ENCODE measurements at regions of chr10 and their contacts with region 1.

Region 1: DNA sequence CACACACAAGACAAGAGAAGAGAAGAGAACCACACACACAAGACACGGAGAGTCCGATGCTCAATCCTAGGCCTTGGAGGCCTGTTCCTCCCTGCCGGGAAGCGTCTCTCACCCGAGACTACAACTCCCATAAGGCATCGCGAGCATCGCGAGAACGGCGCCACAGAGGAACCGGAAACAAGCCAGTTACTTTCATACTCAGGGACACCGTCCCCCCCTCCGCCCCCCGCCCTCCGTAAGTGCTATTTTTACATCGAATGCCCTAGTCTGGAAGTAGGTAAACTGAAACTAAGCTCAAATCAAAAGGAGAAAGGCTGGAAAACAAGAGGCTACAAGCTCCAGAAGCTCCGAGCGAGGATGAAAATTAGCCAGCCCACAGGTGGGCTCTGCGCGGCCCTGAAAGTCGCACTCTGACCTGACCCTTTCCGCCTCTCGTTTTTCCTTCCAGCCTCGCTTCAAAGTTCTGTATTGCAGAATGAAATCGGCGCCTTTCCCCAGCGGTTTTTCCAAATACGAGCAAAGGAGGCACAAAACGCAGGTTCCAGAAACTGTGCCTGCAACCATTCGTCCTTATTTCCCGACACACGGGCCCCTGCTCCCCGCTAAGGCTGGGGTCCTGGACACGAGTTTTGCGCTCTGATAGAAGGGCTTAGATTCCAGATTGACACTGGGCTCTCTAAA is 11.5 kb upstream of the DNAJC12 start:
- DNase-seq: peak; percentile 81 to 91 (median 89)
- ATAC-seq: peak; percentile 100
- H3K4me3 ChIP-seq: peak overlapping the region; percentile 79
- H3K4me3 Mint-ChIP-seq: peak overlapping the region; percentile 84 to 99 (median 96)
- H3K27ac ChIP-seq: peak overlapping the region; percentile 82
- H3K27ac Mint-ChIP-seq: peak overlapping the region; percentile 81 to 100 (median 97)
- H3K4me1 ChIP-seq: peaks cover 5 to 6% of the 10 kb centered on the region in 2 donors
- H3K4me1 Mint-ChIP-seq: peaks cover 5 to 12% (median 8%) of the 10 kb centered on the region in 7 donors
- H3K27me3 ChIP-seq: no peaks in the 10 kb centered on the region
- H3K27me3 Mint-ChIP-seq: no peaks in the 10 kb centered on the region

Region 2: DNA sequence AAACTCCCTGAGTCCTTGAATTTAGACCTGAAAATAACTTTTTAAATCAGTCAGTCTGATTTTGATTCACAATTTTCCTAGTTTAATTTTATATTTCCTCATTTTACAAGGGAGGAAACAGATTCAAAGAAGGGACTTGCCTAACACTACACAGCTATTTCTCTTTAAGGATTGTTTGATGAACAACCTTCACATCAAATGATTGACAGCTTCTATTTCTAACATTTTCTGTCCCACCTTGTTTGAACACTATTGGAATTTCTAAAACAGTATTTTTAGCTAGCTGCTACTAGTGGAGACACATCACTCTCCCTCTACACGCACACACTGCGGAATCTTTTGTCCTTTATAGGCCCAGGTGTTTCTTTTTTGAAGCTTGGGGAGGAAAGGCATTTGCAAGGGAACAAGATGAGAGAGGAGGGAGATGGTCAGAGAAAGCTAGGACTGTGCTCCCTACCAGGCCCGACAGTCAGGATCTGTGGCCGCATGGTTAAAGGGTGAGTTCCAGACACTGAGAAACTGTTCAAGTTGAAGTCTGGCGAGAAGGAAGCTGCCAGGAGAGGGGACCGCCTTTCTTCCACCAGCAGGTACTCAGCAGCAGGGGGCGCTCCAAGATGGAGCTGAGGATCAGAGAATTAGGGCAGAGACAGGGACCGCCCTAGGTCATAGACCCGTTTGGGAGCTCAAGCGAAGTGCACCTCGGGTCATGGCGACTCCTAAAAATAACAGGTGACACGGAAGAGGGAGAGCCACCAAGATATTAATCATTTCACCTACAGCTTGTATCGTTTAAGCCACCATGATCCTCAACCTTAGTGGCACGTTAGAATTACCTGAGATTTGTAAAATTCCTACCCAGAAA is 61.2 kb before region 1 on chr10:
- CTCF ChIA-PET with region 1: interaction called, 5 read pairs
- POLR2A ChIA-PET with region 1: no interaction called
- intact Hi-C with region 1: loop called in 1 of 2 experiments (anchors 1 kb)
- DNase-seq: peak; percentile 23 to 74 (median 52)
- ATAC-seq: peak; percentile 84
- H3K4me3 ChIP-seq: no peak overlapping the region
- H3K4me3 Mint-ChIP-seq: peak overlapping the region in 5 of 10 donors; percentile 2 to 71 (median 59)
- H3K27ac ChIP-seq: no peak overlapping the region
- H3K27ac Mint-ChIP-seq: peak overlapping the region in 3 of 9 donors; percentile 15 to 79 (median 35)
- H3K4me1 ChIP-seq: peaks cover 0 to 4% of the 10 kb centered on the region in 2 donors
- H3K4me1 Mint-ChIP-seq: peaks cover 11 to 54% (median 15%) of the 10 kb centered on the region in 7 donors
- H3K27me3 ChIP-seq: no peaks in the 10 kb centered on the region
- H3K27me3 Mint-ChIP-seq: no peaks in the 10 kb centered on the region

Region 3: DNA sequence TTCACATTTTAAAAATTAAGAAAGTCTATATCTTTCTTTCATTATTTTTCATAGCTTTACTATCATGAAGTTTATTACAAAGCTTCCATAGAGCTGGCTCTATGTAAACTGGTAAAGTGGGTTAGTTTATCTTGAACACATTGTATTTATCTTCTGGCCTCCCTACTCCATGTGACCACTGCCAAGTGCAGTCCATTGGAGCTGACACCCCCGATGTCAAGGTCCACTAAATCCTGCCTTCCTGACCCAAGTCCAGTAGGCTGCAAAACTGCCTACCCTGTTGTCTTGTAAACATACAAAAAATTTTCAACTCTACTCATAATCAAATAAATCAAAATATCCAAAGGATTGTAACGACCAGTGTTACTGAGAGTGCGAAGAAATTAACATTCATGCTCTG is 21.7 kb before region 1 on chr10:
- CTCF ChIA-PET with region 1: no interaction called
- POLR2A ChIA-PET with region 1: no interaction called
- intact Hi-C with region 1: no loop called
- DNase-seq: no peak
- ATAC-seq: no peak
- H3K4me3 ChIP-seq: no peak overlapping the region
- H3K4me3 Mint-ChIP-seq: no peak overlapping the region
- H3K27ac ChIP-seq: no peak overlapping the region
- H3K27ac Mint-ChIP-seq: no peak overlapping the region
- H3K4me1 ChIP-seq: no peaks in the 10 kb centered on the region
- H3K4me1 Mint-ChIP-seq: peaks cover 0 to 10% (median 0%) of the 10 kb centered on the region in 7 donors
- H3K27me3 ChIP-seq: no peaks in the 10 kb centered on the region
- H3K27me3 Mint-ChIP-seq: no peaks in the 10 kb centered on the region

Region 4: DNA sequence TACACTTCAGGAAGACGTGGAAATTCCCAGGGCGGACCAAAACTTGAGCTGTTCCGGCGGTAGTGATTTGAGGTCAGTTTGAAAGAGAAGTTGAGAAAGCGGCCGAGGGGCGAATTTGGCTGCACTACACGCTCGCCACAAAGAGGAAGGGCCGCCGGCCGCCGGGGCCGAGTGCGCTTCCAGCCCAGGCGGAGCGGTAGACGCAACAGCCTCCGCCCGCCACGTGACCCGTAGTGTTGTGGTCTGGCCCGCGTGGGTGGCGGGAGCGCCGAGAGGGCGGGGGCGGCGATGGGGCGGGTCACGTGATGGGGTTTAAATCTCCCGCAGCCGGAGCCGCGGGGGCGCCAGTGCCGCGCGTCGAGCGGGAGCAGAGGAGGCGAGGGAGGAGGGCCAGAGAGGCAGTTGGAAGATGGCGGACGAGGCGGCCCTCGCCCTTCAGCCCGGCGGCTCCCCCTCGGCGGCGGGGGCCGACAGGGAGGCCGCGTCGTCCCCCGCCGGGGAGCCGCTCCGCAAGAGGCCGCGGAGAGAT is 34.9 kb after region 1 on chr10 and contains the start of gene SIRT1:
- CTCF ChIA-PET with region 1: no interaction called
- POLR2A ChIA-PET with region 1: interaction called, 7 read pairs
- intact Hi-C with region 1: loop called (anchors 1 kb)
- DNase-seq: peak; percentile 87 to 95 (median 90)
- ATAC-seq: peak; percentile 89
- H3K4me3 ChIP-seq: peak within 1 kb of the TSS; percentile 75
- H3K4me3 Mint-ChIP-seq: peak within 1 kb of the TSS; percentile 86 to 98 (median 95)
- H3K27ac ChIP-seq: peak within 1 kb of the TSS; percentile 83
- H3K27ac Mint-ChIP-seq: peak within 1 kb of the TSS; percentile 90 to 98 (median 95)
- H3K4me1 ChIP-seq: peaks cover 12 to 16% of the 10 kb centered on the region in 2 donors
- H3K4me1 Mint-ChIP-seq: peaks cover 27 to 43% (median 35%) of the 10 kb centered on the region in 7 donors
- H3K27me3 ChIP-seq: no peaks in the 10 kb centered on the region
- H3K27me3 Mint-ChIP-seq: peaks cover 0 to 5% (median 0%) of the 10 kb centered on the region in 5 donors
- total RNA-seq, gene SIRT1: 25.9 to 66.8 (median 59.5) TPM

Region 5: GRCh38 chr10:67923551-67923950 is 74.1 kb after region 1 on chr10:
- CTCF ChIA-PET with region 1: no interaction called
- POLR2A ChIA-PET with region 1: no interaction called
- intact Hi-C with region 1: no loop called
- DNase-seq: no peak
- ATAC-seq: no peak
- H3K4me3 ChIP-seq: no peak overlapping the region
- H3K4me3 Mint-ChIP-seq: no peak overlapping the region
- H3K27ac ChIP-seq: no peak overlapping the region
- H3K27ac Mint-ChIP-seq: peak overlapping the region in 1 of 9 donors; percentile 24
- H3K4me1 ChIP-seq: no peaks in the 10 kb centered on the region
- H3K4me1 Mint-ChIP-seq: peaks cover 0 to under 1% (median 0%) of the 10 kb centered on the region in 7 donors
- H3K27me3 ChIP-seq: no peaks in the 10 kb centered on the region
- H3K27me3 Mint-ChIP-seq: no peaks in the 10 kb centered on the region

Region 6: DNA sequence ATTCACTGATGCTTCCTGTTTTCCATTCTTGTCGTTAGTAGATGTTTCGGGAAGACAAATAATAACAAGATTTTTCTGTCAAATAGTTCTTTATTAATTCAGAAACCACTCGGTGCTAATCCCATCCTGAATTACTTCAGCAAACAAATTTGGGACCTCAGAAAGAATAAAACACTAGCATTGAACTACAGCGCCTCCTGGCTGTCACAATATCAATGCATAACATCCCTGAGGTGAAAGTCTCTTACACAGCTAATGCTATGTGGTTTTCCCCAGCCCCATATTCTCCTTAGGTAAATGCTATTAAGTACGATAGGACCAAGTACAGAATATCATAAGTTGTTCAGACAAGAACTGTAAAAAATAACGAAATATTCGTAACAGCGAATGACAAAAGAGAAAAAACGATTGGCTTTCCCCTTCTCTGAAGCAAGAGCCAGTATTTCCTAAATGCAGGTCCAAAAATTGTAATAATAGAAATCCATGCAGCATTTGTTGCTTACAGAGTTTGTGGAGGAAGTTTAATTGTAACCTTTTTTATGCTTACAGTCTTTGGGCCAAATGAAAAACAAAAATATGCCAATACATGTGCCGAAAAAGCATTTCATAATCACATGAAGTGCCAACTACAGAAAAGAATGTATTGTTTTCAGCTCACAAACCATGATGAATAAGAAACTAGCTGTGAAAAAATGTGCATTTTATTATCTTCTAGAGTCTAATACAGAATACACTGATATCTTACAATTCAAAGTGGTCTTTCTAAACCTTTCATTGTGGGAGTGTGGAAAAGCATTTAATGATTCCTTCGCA is 307.1 kb after region 1 on chr10:
- CTCF ChIA-PET with region 1: interaction called, 106 read pairs
- POLR2A ChIA-PET with region 1: interaction called, 5 read pairs
- intact Hi-C with region 1: no loop called
- DNase-seq: peak; percentile 12 to 63 (median 43)
- ATAC-seq: peak; percentile 85
- H3K4me3 ChIP-seq: no peak overlapping the region
- H3K4me3 Mint-ChIP-seq: no peak overlapping the region
- H3K27ac ChIP-seq: no peak overlapping the region
- H3K27ac Mint-ChIP-seq: no peak overlapping the region
- H3K4me1 ChIP-seq: no peaks in the 10 kb centered on the region
- H3K4me1 Mint-ChIP-seq: peaks cover 0 to 5% (median 0%) of the 10 kb centered on the region in 7 donors
- H3K27me3 ChIP-seq: no peaks in the 10 kb centered on the region
- H3K27me3 Mint-ChIP-seq: peaks cover 0 to 4% (median 2%) of the 10 kb centered on the region in 5 donors

Region 7: DNA sequence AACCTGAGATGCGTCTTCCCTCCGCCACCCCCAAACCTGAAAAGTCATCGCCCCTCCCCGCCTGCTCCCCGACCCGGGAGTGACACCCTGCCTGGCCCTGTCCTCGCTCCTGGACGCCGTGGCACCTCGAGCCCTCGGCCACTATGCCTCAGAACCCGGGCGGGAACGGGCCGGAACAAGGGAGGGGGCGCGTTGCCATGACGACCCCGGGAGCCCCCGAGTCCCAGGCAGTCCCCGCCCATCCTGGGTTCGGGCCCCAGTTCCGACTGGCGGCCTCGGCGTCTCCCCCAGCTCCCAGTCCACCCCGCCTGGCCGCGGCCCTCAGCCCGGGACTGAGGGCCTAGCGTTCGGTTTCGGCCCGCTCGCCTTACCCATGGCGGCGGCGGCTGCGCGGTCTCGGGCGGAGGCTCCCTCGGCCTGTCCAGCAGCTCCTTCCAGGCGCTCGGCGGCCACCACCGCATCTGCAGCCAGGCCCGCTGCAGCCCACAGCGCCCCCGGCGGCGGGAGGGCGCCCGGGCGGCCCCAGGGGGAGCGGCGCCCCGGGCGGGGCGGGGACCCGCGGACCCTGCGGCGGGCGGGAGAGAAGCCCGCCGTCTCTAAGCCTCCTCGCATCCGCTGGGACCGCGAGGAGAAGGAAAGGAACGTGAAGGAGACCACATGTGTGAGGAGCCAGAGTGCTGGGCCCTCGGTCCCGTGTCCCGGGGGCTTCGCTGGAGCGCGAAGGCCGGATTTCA is 557.5 kb after region 1 on chr10 and contains the start of gene RUFY2:
- CTCF ChIA-PET with region 1: no interaction called
- POLR2A ChIA-PET with region 1: no interaction called
- intact Hi-C with region 1: loop called in 1 of 2 experiments (anchors 5 kb)
- DNase-seq: peak; percentile 61 to 91 (median 74)
- ATAC-seq: peak; percentile 98
- H3K4me3 ChIP-seq: peak within 1 kb of the TSS; percentile 73
- H3K4me3 Mint-ChIP-seq: peak within 1 kb of the TSS; percentile 85 to 96 (median 89)
- H3K27ac ChIP-seq: peak within 1 kb of the TSS; percentile 76
- H3K27ac Mint-ChIP-seq: peak within 1 kb of the TSS; percentile 62 to 90 (median 81)
- H3K4me1 ChIP-seq: peaks cover 3 to 7% of the 10 kb centered on the region in 2 donors
- H3K4me1 Mint-ChIP-seq: peaks cover 10 to 19% (median 17%) of the 10 kb centered on the region in 7 donors
- H3K27me3 ChIP-seq: no peaks in the 10 kb centered on the region
- H3K27me3 Mint-ChIP-seq: no peaks in the 10 kb centered on the region
- total RNA-seq, gene RUFY2: 15.1 to 24.7 (median 20.4) TPM

Region 8: DNA sequence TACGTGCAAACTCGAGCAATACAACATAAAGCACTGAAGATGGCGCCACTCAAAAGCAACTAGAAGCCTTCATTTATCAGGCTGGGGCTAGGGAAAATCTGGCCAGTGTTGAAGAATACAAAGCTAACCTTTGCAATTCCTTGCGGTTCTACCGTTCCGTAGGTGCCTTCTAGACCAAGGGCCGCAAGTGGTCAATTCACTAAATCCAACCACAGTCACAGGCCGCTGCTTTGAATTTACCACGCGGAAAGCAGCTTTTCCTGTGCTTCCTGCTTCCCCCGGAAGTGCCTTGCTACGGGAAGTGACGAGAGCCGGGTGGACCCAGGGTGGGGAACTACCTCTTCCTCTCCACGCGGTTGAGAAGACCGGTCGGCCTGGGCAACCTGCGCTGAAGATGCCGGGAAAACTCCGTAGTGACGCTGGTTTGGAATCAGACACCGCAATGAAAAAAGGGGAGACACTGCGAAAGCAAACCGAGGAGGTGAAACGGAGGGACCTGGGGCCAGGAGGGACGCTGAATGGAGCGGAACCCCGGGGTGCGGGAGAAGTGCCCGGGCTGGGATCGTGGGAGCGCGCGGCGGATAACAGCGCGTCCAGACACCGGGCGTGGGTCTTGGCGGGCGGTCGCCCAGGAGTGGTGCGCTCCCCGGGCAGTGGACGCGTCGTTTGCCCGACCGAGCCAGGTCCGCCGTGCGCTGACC is 1106.5 kb after region 1 on chr10 and contains the start of gene DDX21:
- CTCF ChIA-PET with region 1: no interaction called
- POLR2A ChIA-PET with region 1: no interaction called
- intact Hi-C with region 1: loop called in 1 of 2 experiments (anchors 1 kb)
- DNase-seq: peak; percentile 70 to 94 (median 89)
- ATAC-seq: peak; percentile 89
- H3K4me3 ChIP-seq: peak within 1 kb of the TSS; percentile 71
- H3K4me3 Mint-ChIP-seq: peak within 1 kb of the TSS; percentile 91 to 100 (median 98)
- H3K27ac ChIP-seq: peak within 1 kb of the TSS; percentile 97
- H3K27ac Mint-ChIP-seq: peak within 1 kb of the TSS; percentile 96 to 100 (median 99)
- H3K4me1 ChIP-seq: peaks cover 7 to 11% of the 10 kb centered on the region in 2 donors
- H3K4me1 Mint-ChIP-seq: peaks cover 15 to 53% (median 33%) of the 10 kb centered on the region in 7 donors
- H3K27me3 ChIP-seq: no peaks in the 10 kb centered on the region
- H3K27me3 Mint-ChIP-seq: no peaks in the 10 kb centered on the region
- total RNA-seq, gene DDX21: 43.5 to 101 (median 86.7) TPM

Measured in naive thymus-derived CD4-positive, alpha-beta T cell (primary cell).